Activated CD4-positive, alpha-beta T cell treated with anti-CD3 and anti-CD28 coated beads for 36 hours (primary cell): ENCODE measurements at regions of chr5 and their contacts with region 1.

Region 1: DNA sequence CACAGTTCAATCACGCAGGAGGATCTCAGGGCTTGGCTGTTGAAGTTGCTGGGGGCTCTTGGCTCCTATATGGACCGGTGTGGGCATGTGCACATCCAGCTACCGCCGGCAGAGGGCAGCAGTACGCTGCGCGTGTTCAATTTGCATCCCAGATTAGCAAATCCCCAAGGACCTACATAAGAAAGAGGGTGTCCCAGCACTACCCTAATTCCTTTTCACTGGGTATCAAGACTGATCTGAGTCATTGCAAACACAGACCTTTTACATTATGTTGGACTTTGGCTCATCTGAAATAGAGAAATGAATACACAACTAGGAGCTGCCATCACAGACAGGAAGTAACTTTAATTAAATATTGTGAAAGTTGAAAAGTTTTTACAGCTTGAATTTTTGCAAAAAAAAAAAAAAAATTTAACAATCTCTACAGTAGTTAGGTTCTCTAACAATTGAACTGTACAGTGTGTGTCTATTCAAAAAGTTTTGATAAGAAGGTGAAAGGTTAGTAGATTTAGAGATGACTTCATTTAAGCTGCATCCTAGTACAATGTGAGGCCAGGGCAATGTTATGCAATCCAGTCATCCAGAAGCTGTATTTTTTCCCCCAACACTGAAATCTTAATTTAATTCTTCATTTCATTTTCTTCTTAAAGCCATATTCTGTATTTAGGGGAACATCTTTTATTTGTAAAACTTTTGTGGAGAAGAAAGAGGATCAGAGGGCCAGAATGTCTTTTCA is 404.0 kb downstream of the EBF1 start:
- DNase-seq: peak; percentile 80
- ATAC-seq: peak; percentile 74
- H3K4me3 Mint-ChIP-seq: no peak overlapping the region
- H3K27ac Mint-ChIP-seq: no peak overlapping the region
- H3K4me1 Mint-ChIP-seq: peaks cover 2% of the 10 kb centered on the region
- H3K27me3 Mint-ChIP-seq: no peaks in the 10 kb centered on the region

Region 2: GRCh38 chr5:158174918-158175851 is 520.6 kb before region 1 on chr5:
- CTCF ChIA-PET with region 1: interaction called, 8 read pairs
- POLR2A ChIA-PET with region 1: no interaction called
- intact Hi-C with region 1: loop called (anchors 1 to 10 kb)
- DNase-seq: peak; percentile 75
- ATAC-seq: peak; percentile 61
- H3K4me3 Mint-ChIP-seq: no peak overlapping the region
- H3K27ac Mint-ChIP-seq: no peak overlapping the region
- H3K4me1 Mint-ChIP-seq: no peaks in the 10 kb centered on the region
- H3K27me3 Mint-ChIP-seq: no peaks in the 10 kb centered on the region

Region 3: GRCh38 chr5:159112436-159112835 is 416.7 kb after region 1 on chr5:
- CTCF ChIA-PET with region 1: interaction called, 166 read pairs
- POLR2A ChIA-PET with region 1: no interaction called
- intact Hi-C with region 1: no loop called
- DNase-seq: no peak
- ATAC-seq: no peak
- H3K4me3 Mint-ChIP-seq: no peak overlapping the region
- H3K27ac Mint-ChIP-seq: no peak overlapping the region
- H3K4me1 Mint-ChIP-seq: no peaks in the 10 kb centered on the region
- H3K27me3 Mint-ChIP-seq: peaks cover 17% of the 10 kb centered on the region

Region 4: DNA sequence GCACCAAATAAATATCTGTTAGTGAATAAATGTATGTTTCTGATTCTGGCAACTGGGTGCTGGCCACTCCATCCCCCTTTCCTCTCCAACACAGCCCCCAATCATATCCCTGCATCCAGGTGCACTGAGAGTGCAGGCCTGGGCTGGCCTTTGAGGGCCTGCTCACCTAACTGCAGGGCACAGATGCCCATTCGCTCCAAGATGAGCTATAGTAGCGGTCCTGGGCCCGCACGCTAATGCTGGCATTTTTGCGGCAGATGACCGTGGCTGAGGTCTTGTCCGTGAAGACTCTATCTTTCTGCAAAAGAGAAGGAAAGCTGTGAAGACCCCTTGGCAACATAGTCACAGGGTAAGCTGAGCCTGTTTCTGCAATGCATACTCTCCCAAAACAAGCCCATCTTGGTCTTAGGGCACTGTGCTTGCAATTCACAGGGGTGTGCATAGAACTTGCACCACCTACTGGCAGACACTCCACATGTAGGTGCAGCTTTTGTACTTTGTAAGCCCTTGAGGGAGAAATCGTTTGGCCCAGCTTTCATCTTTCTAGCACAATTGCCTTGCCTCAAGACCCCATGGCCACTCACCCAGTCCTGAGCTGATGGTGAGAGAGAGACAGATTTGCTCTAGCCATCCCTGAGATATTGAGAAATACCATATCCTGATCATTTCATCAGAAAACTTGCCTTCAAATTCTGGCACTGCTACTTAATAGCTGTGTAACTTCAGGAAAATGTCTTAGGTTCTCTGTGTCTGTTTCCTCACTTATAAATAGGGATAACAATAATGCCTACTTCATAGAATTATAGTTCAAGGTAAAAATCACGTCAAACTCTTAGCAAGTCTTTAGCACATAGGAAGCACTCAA is 621.0 kb after region 1 on chr5:
- CTCF ChIA-PET with region 1: no interaction called
- POLR2A ChIA-PET with region 1: no interaction called
- intact Hi-C with region 1: loop called in 1 of 2 experiments (anchors 10 kb)
- DNase-seq: peak; percentile 65
- ATAC-seq: peak; percentile 81
- H3K4me3 Mint-ChIP-seq: no peak overlapping the region
- H3K27ac Mint-ChIP-seq: no peak overlapping the region
- H3K4me1 Mint-ChIP-seq: no peaks in the 10 kb centered on the region
- H3K27me3 Mint-ChIP-seq: peaks cover 2% of the 10 kb centered on the region